Prostate gland (tissue), 2 donors: ENCODE measurements at regions of chr1 and their contacts with region 1.

Region 1: DNA sequence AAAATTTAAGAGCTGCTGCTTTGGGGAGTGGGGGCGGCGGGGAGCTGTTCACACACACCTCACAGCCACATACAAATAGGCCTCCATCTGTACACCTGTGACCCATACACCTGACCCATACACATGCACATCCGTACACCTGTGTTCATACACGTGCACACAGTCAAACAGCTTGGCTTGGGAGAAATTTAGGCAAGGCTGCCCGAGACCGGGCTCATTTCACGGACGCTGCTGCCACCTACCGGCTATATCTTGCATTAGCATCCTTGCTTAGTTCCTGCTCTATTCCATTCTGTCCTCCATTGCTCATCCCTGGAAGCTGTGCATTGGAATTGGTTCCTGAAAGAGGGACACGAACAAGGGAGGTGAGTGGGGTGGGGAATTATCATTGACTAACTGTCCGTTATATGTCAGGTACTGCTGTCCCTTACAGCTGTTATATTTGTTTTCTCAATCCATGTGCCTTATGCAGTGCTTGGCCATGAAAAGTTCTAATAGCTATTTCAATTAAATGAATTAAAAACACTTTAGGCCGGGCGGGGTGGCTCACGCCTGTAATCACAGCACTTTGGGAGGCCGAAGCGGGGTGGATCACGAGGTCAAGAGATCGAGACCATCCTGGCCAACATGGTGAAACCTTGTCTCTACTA is 37.1 kb upstream of the EPB41 start:
- DNase-seq: peak; percentile 72
- H3K4me3 ChIP-seq: no peak overlapping the region
- H3K27ac ChIP-seq: no peak overlapping the region
- H3K4me1 ChIP-seq: no peaks in the 10 kb centered on the region
- H3K27me3 ChIP-seq: no peaks in the 10 kb centered on the region
- CTCF ChIP-seq: peak; percentile 74 to 93 (median 89)
- POLR2A ChIP-seq: no peak

Region 2: DNA sequence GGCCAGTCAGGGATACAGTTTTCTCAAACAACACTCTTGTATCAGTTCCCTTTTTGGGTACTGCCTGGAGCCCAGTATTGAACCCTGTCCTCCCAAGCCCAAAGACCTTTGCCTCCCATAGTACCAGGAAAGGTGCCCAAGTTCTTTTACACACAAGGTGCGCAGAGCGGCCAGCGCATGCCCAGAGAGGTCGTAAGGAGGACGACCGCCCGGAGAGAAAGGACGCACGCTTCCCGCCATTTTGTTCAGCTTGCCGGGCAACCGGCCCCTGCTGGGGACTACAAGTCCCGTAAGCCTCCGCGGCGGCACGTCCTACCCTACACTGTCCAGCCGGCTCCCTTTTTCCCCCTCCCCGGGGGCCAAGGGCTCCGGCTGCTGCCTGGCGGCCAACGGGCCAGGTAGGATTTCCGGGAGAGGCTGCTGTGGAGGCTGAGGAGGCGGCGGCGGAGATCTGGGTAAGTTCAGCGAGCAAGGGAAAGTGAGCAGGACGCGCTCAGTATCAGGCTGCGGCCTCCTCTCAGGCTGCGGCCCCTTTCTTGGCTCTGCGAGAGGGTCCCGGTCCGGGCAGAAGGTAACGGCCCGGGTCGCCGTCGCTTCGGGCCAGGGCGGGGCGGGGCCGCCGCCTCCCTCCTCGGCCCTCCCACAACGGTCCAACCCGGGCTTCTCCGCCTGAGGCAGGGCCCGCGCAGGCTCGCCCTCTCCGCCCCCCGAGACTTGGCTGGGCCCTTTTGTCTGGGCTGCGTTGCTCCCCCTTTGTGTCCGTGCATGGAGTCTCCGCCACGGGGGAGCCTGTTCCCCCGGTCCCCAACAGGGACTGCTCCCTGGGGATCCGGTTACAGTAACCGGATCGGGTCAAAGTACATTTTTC is 507.7 kb before region 1 on chr1 and contains the start of gene PHACTR4:
- intact Hi-C with region 1: loop called (anchors 10 kb)
- DNase-seq: peak; percentile 92
- H3K4me3 ChIP-seq: peak within 1 kb of the TSS; percentile 64 to 71
- H3K27ac ChIP-seq: peak within 1 kb of the TSS; percentile 92 to 94
- H3K4me1 ChIP-seq: no peaks in the 10 kb centered on the region
- H3K27me3 ChIP-seq: no peaks in the 10 kb centered on the region
- CTCF ChIP-seq: peak in 1 of 4 experiments; percentile 48
- POLR2A ChIP-seq: peak; percentile 86
- total RNA-seq, gene PHACTR4: 38.9 to 45.0 TPM

Region 3: GRCh38 chr1:28815533-28816185 is 61.6 kb before region 1 on chr1:
- intact Hi-C with region 1: no loop called
- DNase-seq: no peak
- H3K4me3 ChIP-seq: no peak overlapping the region
- H3K27ac ChIP-seq: no peak overlapping the region
- H3K4me1 ChIP-seq: no peaks in the 10 kb centered on the region
- H3K27me3 ChIP-seq: peaks cover 22% of the 10 kb centered on the region
- CTCF ChIP-seq: no peak
- POLR2A ChIP-seq: no peak